ENCODE measurements at regions of chr11 and their contacts with region 1.

Region 1: GRCh38 chr11:61679893-61680621 is at the start of gene DAGLA:
- DNase-seq: peak; percentile 85
- H3K4me3 ChIP-seq: peak within 1 kb of the TSS; percentile 18 to 54 (median 52)
- H3K27ac ChIP-seq: peak within 1 kb of the TSS in 3 of 4 donors; percentile 50 to 64 (median 52)
- H3K4me1 ChIP-seq: peaks cover 0 to 46% (median 26%) of the 10 kb centered on the region in 4 donors
- H3K27me3 ChIP-seq: peaks cover 0 to 23% (median 0%) of the 10 kb centered on the region in 3 donors
- CTCF ChIP-seq: peak; percentile 54 to 92 (median 82)
- EP300 ChIP-seq: no peak
- POLR2A ChIP-seq: no peak
- total RNA-seq, gene DAGLA: 1.8 to 4.2 (median 2.0) TPM

Region 2: GRCh38 chr11:61347916-61348461 is 332.1 kb before region 1 on chr11:
- intact Hi-C with region 1: no loop called
- DNase-seq: no peak
- H3K4me3 ChIP-seq: no peak overlapping the region
- H3K27ac ChIP-seq: no peak overlapping the region
- H3K4me1 ChIP-seq: no peaks in the 10 kb centered on the region
- H3K27me3 ChIP-seq: no peaks in the 10 kb centered on the region
- CTCF ChIP-seq: no peak
- EP300 ChIP-seq: no peak
- POLR2A ChIP-seq: no peak

Region 3: GRCh38 chr11:61701242-61701886 is 21.3 kb after region 1 on chr11:
- intact Hi-C with region 1: loop called (anchors 2 kb)
- DNase-seq: no peak
- H3K4me3 ChIP-seq: no peak overlapping the region
- H3K27ac ChIP-seq: peak overlapping the region; percentile 77 to 94 (median 86)
- H3K4me1 ChIP-seq: peaks cover 0 to 56% (median 50%) of the 10 kb centered on the region in 4 donors
- H3K27me3 ChIP-seq: no peaks in the 10 kb centered on the region
- CTCF ChIP-seq: peak in 2 of 4 experiments; percentile 12 to 27
- EP300 ChIP-seq: no peak
- POLR2A ChIP-seq: no peak

Region 4: GRCh38 chr11:61718621-61719302 is 38.7 kb after region 1 on chr11:
- intact Hi-C with region 1: loop called (anchors 5 kb)
- DNase-seq: peak; percentile 85
- H3K4me3 ChIP-seq: peak overlapping the region; percentile 43 to 51 (median 48)
- H3K27ac ChIP-seq: peak overlapping the region; percentile 63 to 69 (median 66)
- H3K4me1 ChIP-seq: peaks cover 0 to 21% (median 20%) of the 10 kb centered on the region in 4 donors
- H3K27me3 ChIP-seq: no peaks in the 10 kb centered on the region
- CTCF ChIP-seq: no peak
- EP300 ChIP-seq: no peak
- POLR2A ChIP-seq: no peak

Region 5: DNA sequence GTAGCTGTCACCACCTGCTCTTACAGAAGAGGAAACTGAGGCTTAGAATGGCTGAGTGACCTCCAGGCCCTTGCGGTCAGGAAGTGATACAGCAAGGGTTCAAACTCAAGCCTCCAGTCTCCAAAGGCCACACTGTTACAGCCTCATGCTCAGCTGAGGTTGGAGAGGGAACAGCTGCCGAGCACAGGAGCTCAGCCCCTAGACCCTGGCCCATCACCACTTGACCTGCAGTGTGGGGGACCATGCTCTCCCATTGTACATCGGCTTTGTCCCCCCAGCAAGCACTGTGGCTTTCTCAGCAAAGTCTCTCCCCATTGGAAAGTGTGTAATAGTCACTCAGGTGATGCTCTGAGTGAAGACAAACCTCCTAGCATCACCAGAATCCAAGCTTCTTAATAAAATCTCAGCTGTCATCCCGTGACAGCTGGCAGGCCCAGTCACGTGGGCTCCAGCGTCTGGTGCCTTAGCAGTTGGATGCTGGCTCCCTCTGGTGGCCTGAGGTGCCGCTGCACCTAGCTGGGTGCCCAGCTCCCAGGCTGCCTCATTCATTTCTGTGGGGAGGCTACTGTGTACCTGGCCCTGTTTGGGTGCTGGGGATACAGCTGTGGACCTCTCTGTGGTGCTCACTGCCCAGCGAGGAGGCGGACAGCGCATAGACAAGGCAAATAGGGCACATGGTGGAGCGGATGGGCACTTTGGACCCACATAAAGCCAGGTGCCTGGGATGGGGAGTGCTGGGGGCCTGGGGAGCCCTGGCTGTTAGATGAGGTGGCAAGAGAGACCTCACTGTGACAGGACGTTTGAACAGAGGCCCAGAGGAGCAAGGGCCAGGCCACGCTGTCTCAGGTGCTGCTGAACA is 53.3 kb after region 1 on chr11:
- intact Hi-C with region 1: loop called (anchors 1 kb)
- DNase-seq: peak; percentile 93
- H3K4me3 ChIP-seq: no peak overlapping the region
- H3K27ac ChIP-seq: peak overlapping the region; percentile 29 to 74 (median 69)
- H3K4me1 ChIP-seq: peaks cover 0 to 24% (median 22%) of the 10 kb centered on the region in 4 donors
- H3K27me3 ChIP-seq: no peaks in the 10 kb centered on the region
- CTCF ChIP-seq: peak; percentile 98 to 99 (median 98)
- EP300 ChIP-seq: peak in 1 of 4 donors; percentile 24
- POLR2A ChIP-seq: no peak

Measured in sigmoid colon (tissue), 7 donors.